Naive thymus-derived CD4-positive, alpha-beta T cell (primary cell): ENCODE measurements at regions of chr18 and their contacts with region 1.

Region 1: DNA sequence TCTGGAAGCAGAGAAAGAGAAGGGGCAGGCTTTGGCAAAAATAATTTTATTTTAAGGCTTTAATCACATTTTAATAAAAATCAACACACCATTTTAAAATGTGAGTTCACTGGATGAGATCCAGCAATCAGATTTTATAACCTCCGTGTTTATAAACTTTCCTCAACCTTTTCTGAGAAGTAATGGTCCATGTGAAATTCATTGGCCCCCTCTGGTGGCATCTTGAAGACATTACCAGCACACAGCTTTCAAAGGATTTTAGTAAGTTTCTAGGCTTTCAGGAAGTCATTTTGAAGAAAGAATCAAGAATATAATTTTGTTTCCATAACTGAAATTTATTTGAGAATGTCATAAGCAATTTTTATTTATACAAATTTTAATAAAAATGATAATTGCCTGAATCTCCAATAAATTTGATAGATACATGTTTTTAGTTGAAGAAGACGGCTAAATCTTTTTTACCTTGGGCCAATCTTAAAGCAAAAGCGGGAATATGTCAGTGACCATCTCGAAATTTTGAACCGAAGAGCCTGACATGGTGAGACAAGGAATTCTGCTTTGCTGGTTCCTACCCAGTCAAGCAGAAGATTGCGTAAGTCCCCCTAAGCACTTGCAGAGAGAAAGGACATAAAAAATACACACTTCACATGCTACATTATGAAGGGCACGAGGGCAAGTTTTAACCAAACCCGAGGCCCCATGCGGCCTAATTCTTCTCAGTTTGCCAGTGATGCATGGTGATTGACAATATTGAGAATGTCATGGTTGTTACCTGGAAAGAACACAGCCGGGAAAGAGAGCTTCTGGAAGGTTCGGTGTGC is 128.4 kb upstream of the CBLN2 start:
- DNase-seq: peak in 2 of 9 donors; percentile 3 to 4
- ATAC-seq: no peak
- H3K4me3 ChIP-seq: no peak overlapping the region
- H3K4me3 Mint-ChIP-seq: no peak overlapping the region
- H3K27ac ChIP-seq: no peak overlapping the region
- H3K27ac Mint-ChIP-seq: no peak overlapping the region
- H3K4me1 ChIP-seq: no peaks in the 10 kb centered on the region
- H3K4me1 Mint-ChIP-seq: no peaks in the 10 kb centered on the region
- H3K27me3 ChIP-seq: no peaks in the 10 kb centered on the region
- H3K27me3 Mint-ChIP-seq: peaks cover 0 to 15% (median 5%) of the 10 kb centered on the region in 5 donors

Region 2: DNA sequence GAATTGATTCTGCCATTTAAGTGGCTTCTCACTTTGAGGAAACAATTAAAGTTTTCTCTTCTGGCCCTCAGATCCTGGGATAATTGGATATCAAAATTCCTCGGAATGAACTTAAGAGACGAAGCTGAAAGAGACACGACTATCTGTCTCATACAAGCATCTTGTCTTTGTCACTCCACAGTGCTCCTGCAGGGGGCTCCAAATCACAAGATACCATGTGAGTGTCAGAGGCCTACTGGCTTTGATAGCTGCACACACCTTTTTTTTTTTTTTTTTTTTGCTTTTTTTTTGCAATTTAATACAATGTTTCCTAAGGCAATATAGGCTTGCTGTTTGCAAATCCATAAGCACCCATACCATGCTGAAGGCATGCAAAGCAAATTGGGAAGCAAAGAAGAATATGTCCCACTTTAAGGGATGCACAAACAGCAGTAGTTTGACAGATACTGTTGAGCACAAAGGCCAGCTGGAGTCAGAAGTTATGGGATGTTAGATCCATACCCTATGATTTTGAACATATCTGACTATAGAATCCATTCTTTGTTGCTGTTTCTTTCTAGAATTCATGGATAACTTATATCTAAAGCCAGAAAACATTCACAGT is 19.5 kb before region 1 on chr18:
- CTCF ChIA-PET with region 1: no interaction called
- POLR2A ChIA-PET with region 1: no interaction called
- intact Hi-C with region 1: loop called in 1 of 2 experiments (anchors 1 kb)
- DNase-seq: peak in 4 of 9 donors; percentile 3 to 22 (median 6)
- ATAC-seq: peak; percentile 46
- H3K4me3 ChIP-seq: no peak overlapping the region
- H3K4me3 Mint-ChIP-seq: no peak overlapping the region
- H3K27ac ChIP-seq: no peak overlapping the region
- H3K27ac Mint-ChIP-seq: no peak overlapping the region
- H3K4me1 ChIP-seq: no peaks in the 10 kb centered on the region
- H3K4me1 Mint-ChIP-seq: no peaks in the 10 kb centered on the region
- H3K27me3 ChIP-seq: no peaks in the 10 kb centered on the region
- H3K27me3 Mint-ChIP-seq: peaks cover 0 to 7% (median 0%) of the 10 kb centered on the region in 5 donors

Region 3: GRCh38 chr18:73060666-73061270 is 388.2 kb after region 1 on chr18:
- CTCF ChIA-PET with region 1: no interaction called
- POLR2A ChIA-PET with region 1: no interaction called
- intact Hi-C with region 1: no loop called
- DNase-seq: no peak
- ATAC-seq: no peak
- H3K4me3 ChIP-seq: no peak overlapping the region
- H3K4me3 Mint-ChIP-seq: no peak overlapping the region
- H3K27ac ChIP-seq: no peak overlapping the region
- H3K27ac Mint-ChIP-seq: no peak overlapping the region
- H3K4me1 ChIP-seq: no peaks in the 10 kb centered on the region
- H3K4me1 Mint-ChIP-seq: no peaks in the 10 kb centered on the region
- H3K27me3 ChIP-seq: no peaks in the 10 kb centered on the region
- H3K27me3 Mint-ChIP-seq: no peaks in the 10 kb centered on the region

Region 4: DNA sequence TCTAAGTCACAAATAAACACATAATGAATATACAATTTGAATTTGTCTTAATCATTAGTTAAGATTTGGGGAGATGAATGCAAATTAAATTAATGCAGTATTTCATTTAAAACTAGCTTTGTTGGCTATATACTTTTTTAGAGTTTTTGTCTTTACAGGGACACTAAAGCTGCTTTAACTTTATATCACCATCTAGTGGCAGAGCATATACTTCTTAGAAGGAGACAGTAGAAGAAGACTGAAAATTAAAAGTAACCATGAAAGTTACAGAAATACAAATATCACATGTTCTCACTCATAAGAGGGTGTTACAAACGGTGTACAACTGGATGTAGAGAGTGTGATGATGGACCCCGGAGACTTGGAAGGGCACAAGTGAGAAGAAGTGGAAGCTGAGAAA is 463.6 kb after region 1 on chr18:
- CTCF ChIA-PET with region 1: no interaction called
- POLR2A ChIA-PET with region 1: no interaction called
- intact Hi-C with region 1: no loop called
- DNase-seq: no peak
- ATAC-seq: no peak
- H3K4me3 ChIP-seq: no peak overlapping the region
- H3K4me3 Mint-ChIP-seq: no peak overlapping the region
- H3K27ac ChIP-seq: no peak overlapping the region
- H3K27ac Mint-ChIP-seq: no peak overlapping the region
- H3K4me1 ChIP-seq: no peaks in the 10 kb centered on the region
- H3K4me1 Mint-ChIP-seq: no peaks in the 10 kb centered on the region
- H3K27me3 ChIP-seq: no peaks in the 10 kb centered on the region
- H3K27me3 Mint-ChIP-seq: no peaks in the 10 kb centered on the region